Caco-2 (cell line): ENCODE measurements at regions of chr17 and their contacts with region 1.

Region 1: GRCh38 chr17:55421179-55421934 is at the start of gene MMD:
- DNase-seq: peak in 1 of 2 experiments; percentile 46
- H3K4me3 ChIP-seq: peak within 1 kb of the TSS; percentile 78
- H3K4me3 Mint-ChIP-seq: peak within 1 kb of the TSS; percentile 90
- H3K27ac Mint-ChIP-seq: peak within 1 kb of the TSS; percentile 81
- H3K4me1 ChIP-seq: peaks cover 19% of the 10 kb centered on the region
- H3K4me1 Mint-ChIP-seq: peaks cover 64% of the 10 kb centered on the region
- H3K27me3 ChIP-seq: no peaks in the 10 kb centered on the region
- H3K27me3 Mint-ChIP-seq: no peaks in the 10 kb centered on the region
- CTCF ChIP-seq: no peak
- total RNA-seq, gene MMD: 38.6 and 39.0 TPM in 2 replicates

Region 2: GRCh38 chr17:55444471-55445441 is 23.4 kb after region 1 on chr17:
- CTCF ChIA-PET with region 1: no interaction called
- POLR2A ChIA-PET with region 1: interaction called, 6 read pairs
- intact Hi-C with region 1: loop called (anchors 2 kb)
- DNase-seq: peak; percentile 47 to 56
- H3K4me3 ChIP-seq: no peak overlapping the region
- H3K4me3 Mint-ChIP-seq: no peak overlapping the region
- H3K27ac Mint-ChIP-seq: peak overlapping the region; percentile 60
- H3K4me1 ChIP-seq: peaks cover 68% of the 10 kb centered on the region
- H3K4me1 Mint-ChIP-seq: peaks cover 42% of the 10 kb centered on the region
- H3K27me3 ChIP-seq: no peaks in the 10 kb centered on the region
- H3K27me3 Mint-ChIP-seq: no peaks in the 10 kb centered on the region
- CTCF ChIP-seq: no peak

Region 3: GRCh38 chr17:55496094-55496881 is 74.9 kb after region 1 on chr17:
- CTCF ChIA-PET with region 1: no interaction called
- POLR2A ChIA-PET with region 1: no interaction called
- intact Hi-C with region 1: loop called (anchors 2 kb)
- DNase-seq: peak; percentile 56 to 63
- H3K4me3 ChIP-seq: no peak overlapping the region
- H3K4me3 Mint-ChIP-seq: peak overlapping the region; percentile 49
- H3K27ac Mint-ChIP-seq: peak overlapping the region; percentile 68
- H3K4me1 ChIP-seq: peaks cover 20% of the 10 kb centered on the region
- H3K4me1 Mint-ChIP-seq: peaks cover 20% of the 10 kb centered on the region
- H3K27me3 ChIP-seq: no peaks in the 10 kb centered on the region
- H3K27me3 Mint-ChIP-seq: no peaks in the 10 kb centered on the region
- CTCF ChIP-seq: no peak

Region 4: DNA sequence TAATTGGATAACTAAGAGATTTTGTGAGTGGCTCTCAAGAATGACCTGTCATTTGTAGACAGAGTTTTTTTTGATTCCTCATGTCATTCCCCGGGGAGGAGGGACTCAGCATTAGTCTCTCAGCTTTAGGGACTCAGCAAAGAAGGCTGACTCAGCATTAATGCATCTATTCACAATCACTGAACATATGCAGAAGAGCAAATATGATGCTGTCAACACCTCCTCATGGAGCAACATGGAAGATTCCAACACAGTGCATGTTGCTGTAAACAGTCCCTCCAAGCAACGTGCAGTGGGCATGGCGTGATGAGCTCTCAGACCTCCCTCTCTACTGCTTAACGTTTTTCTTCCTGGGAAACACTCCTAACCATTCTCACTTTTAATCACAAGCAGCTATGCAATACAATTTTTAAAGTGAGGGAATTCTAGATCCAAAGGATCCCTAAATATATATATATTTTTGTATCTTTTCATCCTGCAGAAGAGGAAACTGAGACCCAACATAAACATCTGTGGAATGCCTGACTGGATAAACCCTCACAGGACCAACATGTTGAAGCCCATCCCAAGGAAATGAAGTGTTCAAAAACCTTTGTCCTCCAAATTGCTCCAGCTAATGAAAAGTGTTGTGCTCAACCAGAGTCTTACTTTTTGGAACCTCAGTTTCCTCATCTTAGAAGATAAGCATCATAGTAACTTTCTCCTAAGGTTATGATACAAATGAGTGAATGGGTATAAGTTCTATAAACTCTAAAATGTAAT is 262.4 kb after region 1 on chr17:
- CTCF ChIA-PET with region 1: no interaction called
- POLR2A ChIA-PET with region 1: no interaction called
- intact Hi-C with region 1: no loop called
- DNase-seq: no peak
- H3K4me3 ChIP-seq: no peak overlapping the region
- H3K4me3 Mint-ChIP-seq: no peak overlapping the region
- H3K27ac Mint-ChIP-seq: no peak overlapping the region
- H3K4me1 ChIP-seq: no peaks in the 10 kb centered on the region
- H3K4me1 Mint-ChIP-seq: no peaks in the 10 kb centered on the region
- H3K27me3 ChIP-seq: no peaks in the 10 kb centered on the region; the same call in 1 of the 2 replicates
- H3K27me3 Mint-ChIP-seq: peaks cover 23% of the 10 kb centered on the region
- CTCF ChIP-seq: no peak